Left cardiac atrium (tissue), 4 donors: ENCODE measurements at regions of chr7 and their contacts with region 1.

Region 1: DNA sequence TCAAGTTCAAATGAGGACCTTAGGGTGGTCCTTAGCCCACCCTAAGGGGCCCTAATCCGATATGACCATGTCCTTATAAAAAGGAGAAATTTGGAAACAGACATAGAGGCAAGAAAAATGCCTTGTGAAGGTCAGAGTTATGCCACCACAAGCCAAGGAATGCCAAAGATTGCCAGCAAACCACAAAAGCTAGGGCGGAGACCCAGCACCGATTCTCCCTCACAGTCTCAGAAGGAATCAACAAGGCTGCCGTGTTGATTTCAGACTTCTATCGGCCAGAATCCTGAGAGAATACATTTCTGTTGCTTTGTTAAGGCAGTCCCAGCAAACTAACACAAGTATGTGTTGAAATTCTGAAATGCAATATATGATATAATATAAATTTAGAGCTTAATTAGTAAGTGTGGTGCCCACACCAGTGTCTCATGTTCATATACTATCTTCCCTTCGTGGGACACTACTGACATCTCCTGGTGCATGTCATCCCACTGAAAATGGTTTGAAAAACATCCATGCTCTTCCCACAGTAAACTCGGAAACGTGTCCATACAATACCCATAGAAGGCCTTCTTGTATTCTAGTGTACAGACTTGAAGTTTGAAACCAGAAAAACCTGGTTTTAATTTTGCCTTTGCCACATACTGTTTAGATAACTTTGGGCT is 349.0 kb downstream of the TNS3 start:
- DNase-seq: no peak
- ATAC-seq: no peak

Region 2: DNA sequence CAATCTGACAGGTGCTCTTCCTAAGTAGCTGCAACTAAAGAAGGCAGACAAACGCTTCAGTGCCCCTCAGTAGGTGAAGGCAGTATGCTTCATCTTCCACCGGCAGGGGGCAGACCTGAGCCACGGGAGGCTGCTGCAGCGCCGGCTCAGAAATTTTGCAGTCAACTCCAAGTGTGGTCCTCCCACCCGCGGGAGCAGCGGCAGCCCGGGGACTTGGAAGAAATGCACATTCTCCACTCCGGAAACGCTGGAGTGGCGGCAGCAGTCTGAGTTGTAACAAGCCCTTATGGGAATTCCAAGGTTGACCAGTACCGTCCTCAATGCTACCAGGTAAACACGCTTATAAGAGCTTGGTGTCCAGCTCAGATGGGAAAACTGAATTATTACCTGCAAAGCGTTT is 1315.2 kb before region 1 on chr7:
- intact Hi-C with region 1: loop called (anchors 5 to 10 kb)
- DNase-seq: peak; percentile 84
- ATAC-seq: peak; percentile 54 to 56

Region 3: DNA sequence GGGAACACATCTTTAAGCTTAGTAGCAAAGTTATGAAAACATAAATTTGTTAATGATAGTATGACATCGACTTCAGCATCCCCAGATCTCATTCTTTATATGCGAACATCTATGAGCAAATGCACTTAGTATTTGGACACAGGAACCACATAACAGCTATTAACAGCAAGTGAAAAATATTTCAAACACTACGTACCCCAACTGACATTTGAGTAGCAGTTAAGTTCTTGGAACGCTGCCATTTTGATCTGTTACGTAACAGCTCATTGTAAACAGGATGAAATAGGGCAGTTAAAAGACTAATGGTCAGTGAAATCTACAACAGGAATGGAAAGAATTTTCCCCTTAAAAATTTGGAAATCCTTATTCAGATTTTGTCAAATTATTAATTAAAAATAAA is 79.8 kb before region 1 on chr7:
- intact Hi-C with region 1: no loop called
- DNase-seq: no peak
- ATAC-seq: peak; percentile 55 to 62

Region 4: DNA sequence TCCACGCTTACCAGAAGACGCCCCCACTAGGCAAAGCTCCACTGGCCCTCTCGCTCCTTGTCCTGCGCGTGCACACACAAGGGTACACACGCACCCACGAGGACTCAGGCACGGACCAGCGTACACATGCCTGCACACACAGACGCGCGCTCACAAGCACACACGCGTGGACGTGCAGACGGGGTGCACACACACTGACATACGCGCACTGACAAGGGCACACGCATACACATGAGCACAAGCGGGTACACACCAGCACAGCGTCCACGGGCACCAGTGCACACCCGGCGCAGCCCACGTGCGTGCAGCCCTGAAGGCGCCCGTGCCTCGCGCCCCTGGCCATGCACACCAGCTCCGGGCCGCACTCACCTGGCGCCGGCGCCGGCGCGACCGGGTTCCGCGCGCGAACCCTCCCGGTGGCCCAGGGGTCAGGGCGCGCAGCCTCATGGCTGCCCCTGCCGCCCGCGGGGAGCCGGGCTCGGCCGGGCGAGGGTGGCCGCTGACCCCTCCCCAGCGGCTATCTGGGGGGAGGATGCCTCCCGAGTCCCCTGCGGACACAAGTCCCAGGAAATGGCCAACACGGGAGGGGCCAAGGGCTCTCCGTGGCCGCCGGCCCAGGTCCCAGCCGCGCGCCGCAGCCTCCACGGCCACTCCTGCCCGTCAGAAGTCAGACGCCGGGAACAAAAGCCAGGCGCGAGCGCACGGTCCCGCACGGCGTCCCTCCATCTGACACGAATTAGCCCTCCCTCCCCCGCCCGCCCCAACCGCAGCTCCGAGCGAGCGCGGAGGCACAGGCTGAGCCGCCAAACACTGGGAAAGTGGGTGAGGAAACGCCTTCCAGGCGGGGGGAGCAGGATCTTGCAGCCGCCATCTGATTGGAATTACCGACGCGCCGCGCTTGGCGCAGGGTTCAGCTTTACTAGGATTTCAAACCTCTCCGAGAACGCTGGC is 304.1 kb after region 1 on chr7:
- intact Hi-C with region 1: no loop called
- DNase-seq: peak; percentile 65
- ATAC-seq: peak; percentile 77 to 79

Region 5: GRCh38 chr7:47698231-47698785 is 465.4 kb after region 1 on chr7:
- intact Hi-C with region 1: no loop called
- DNase-seq: no peak
- ATAC-seq: no peak